HepG2 (cell line): ENCODE measurements at regions of chr1 and their contacts with region 1.

Region 1: DNA sequence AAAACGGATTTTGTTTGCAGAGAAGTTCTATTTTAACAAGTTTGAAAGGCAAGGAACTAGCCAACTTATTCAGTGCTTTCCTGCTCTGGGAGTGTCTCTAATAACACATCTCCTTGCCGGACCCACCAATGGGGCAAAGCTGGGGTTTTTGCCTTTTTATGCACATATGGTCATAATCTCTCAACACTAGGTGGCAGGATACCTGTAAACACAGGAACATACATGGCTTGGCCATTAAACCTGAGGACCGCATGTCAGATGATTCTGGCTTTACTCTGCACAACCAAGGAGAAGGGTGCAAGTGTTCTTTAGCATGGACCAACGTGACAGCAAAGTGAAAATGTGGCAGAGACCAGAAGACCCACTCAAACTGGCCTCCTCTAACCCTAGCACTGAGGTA is 4.9 kb downstream of the TMEM9 start:
- DNase-seq: peak; percentile 59
- ATAC-seq: peak; percentile 57
- H3K4me3 ChIP-seq: no peak overlapping the region
- H3K27ac ChIP-seq: no peak overlapping the region
- H3K4me1 ChIP-seq: peaks cover 13% of the 10 kb centered on the region
- H3K27me3 ChIP-seq: no peaks in the 10 kb centered on the region
- CTCF ChIP-seq: peak; percentile 68
- EP300 ChIP-seq: no peak
- POLR2A ChIP-seq: no peak
- RAD21 ChIP-seq: peak; percentile 70

Region 2: GRCh38 chr1:201114236-201115131 is 34.9 kb before region 1 on chr1:
- CTCF ChIA-PET with region 1: no interaction called
- POLR2A ChIA-PET with region 1: no interaction called
- in situ Hi-C with region 1: no loop called
- intact Hi-C with region 1: loop called (anchors 1 kb)
- DNase-seq: peak; percentile 70
- ATAC-seq: peak; percentile 97
- H3K4me3 ChIP-seq: peak overlapping the region in 2 of 3 experiments; percentile 48 to 74; a peak in 4 of 6 replicates
- H3K27ac ChIP-seq: no peak overlapping the region
- H3K4me1 ChIP-seq: no peaks in the 10 kb centered on the region
- H3K27me3 ChIP-seq: peaks cover 0 to 21% of the 10 kb centered on the region in 2 experiments; a peak in 3 of 5 replicates
- CTCF ChIP-seq: peak; percentile 95
- EP300 ChIP-seq: no peak
- POLR2A ChIP-seq: no peak
- RAD21 ChIP-seq: peak; percentile 90

Region 3: DNA sequence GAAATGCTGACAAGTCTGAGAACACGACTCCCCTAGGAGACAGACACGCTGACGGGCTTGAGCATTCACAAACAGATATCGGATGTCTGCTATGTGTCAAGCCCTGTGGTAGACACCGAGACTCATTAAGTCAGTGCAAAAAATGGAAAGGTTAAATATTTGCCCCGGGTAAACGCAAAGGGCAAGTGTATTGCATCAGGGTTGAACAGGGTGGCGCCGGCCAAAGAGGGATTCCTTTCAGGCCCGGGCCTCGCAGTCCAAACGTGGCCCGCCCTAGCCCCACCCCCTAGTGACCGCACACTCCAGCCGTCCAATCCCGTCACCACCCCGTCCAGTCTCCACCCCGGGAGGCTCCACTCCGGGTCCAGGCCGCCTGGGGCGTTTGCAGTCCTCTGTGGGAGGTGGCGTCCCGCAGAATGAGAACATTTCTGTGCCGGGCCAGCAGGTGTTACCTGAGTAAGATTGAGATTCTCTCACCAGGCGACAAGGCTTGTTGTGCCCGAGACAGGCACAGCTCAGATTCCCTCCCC is 21.2 kb after region 1 on chr1:
- CTCF ChIA-PET with region 1: no interaction called
- POLR2A ChIA-PET with region 1: interaction called, 30 read pairs
- in situ Hi-C with region 1: no loop called
- intact Hi-C with region 1: loop called (anchors 1 kb)
- DNase-seq: peak; percentile 99
- ATAC-seq: peak; percentile 97
- H3K4me3 ChIP-seq: peak overlapping the region; percentile 51 to 76 (median 54)
- H3K27ac ChIP-seq: peak overlapping the region; percentile 96
- H3K4me1 ChIP-seq: peaks cover 60% of the 10 kb centered on the region
- H3K27me3 ChIP-seq: no peaks in the 10 kb centered on the region; a peak in 2 of 5 replicates
- CTCF ChIP-seq: no peak
- EP300 ChIP-seq: peak; percentile 32 to 90; a peak in 2 of 4 replicates
- POLR2A ChIP-seq: peak; percentile 84 to 92
- RAD21 ChIP-seq: no peak

Region 4: DNA sequence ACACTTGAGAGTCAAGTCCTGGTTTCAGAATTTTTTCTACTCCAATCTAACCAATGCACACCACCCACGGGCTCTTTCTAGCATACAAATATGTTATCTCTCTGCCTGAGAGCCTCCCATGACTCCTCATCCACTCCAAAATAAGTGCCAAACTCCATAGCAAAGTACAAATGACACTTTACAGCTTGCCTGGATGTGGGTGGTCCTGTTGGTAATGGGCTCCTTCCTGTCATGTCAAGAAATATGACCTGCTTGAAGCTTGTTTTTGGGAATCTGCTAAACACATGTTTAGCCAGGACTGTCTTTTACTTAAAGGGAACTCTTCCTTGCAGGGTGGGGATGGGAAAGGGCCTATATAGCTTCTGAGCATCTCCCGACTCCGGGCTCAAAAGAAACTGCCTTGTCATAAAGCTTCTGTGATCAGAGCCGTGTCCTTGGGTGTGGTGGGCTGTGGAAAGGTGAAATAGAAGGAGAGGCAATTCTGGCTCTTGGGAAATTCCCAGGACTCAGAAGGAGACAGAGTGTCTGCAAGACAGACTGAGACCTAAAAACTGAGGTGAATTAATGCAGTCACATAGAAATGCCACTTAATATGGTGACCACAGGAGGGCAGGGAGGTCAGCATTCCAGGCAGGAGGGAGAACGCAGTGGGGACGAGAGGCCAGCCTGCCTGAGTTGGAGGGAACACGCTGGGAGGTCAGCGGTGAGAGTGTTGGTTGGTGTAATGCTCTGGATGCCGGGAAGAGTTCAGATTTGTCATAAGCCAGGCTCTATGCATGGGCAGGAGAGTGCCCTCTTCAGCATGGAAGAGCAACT is 35.1 kb after region 1 on chr1:
- CTCF ChIA-PET with region 1: interaction called, 16 read pairs
- POLR2A ChIA-PET with region 1: no interaction called
- in situ Hi-C with region 1: no loop called
- intact Hi-C with region 1: loop called (anchors 1 kb)
- DNase-seq: peak; percentile 58
- ATAC-seq: peak; percentile 98
- H3K4me3 ChIP-seq: no peak overlapping the region
- H3K27ac ChIP-seq: no peak overlapping the region
- H3K4me1 ChIP-seq: peaks cover 17% of the 10 kb centered on the region
- H3K27me3 ChIP-seq: peaks cover 3 to 54% of the 10 kb centered on the region in 2 experiments; a peak in 4 of 5 replicates
- CTCF ChIP-seq: peak; percentile 74
- EP300 ChIP-seq: no peak
- POLR2A ChIP-seq: no peak
- RAD21 ChIP-seq: peak; percentile 53; the same call in 1 of the 2 replicates

Region 5: DNA sequence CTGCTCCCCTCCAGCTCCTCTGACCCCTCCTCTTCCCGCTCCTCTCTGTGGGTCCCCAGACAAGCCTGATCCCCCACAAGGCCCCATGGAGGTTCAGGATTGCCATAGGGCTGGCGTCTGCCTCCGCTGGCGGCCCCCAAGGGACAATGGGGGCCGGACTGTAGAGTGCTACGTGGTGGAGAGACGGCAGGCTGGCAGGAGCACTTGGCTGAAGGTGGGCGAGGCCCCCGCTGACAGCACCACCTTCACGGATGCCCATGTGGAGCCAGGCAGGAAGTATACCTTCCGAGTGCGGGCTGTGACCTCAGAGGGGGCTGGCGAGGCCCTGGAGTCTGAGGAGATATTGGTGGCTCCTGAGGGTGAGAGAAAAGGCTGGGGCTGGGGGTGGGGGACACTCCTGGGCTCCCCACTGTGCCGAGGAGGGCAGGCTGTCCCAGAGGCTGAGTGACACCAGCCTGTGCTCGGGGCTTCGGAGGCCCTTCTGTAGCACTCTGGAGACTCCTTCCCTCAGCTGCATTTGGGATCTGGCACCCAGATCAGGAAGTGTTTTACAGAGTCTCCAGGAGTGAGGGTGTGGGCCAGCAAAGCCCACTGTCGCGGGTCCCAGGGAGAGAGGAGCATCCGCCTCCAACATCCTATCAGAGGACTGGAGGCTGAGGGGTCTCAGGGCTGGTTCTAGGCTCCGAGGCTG is 67.1 kb after region 1 on chr1:
- CTCF ChIA-PET with region 1: interaction called, 23 read pairs
- POLR2A ChIA-PET with region 1: no interaction called
- in situ Hi-C with region 1: loop called (anchors 5 kb)
- intact Hi-C with region 1: no loop called
- DNase-seq: no peak
- ATAC-seq: no peak
- H3K4me3 ChIP-seq: no peak overlapping the region
- H3K27ac ChIP-seq: no peak overlapping the region
- H3K4me1 ChIP-seq: peaks cover 24% of the 10 kb centered on the region
- H3K27me3 ChIP-seq: peaks cover 0 to 35% of the 10 kb centered on the region in 2 experiments; a peak in 3 of 5 replicates
- CTCF ChIP-seq: no peak
- EP300 ChIP-seq: no peak
- POLR2A ChIP-seq: no peak
- RAD21 ChIP-seq: no peak

Region 6: GRCh38 chr1:201224666-201225370 is 75.4 kb after region 1 on chr1:
- CTCF ChIA-PET with region 1: interaction called, 23 read pairs
- POLR2A ChIA-PET with region 1: no interaction called
- in situ Hi-C with region 1: no loop called
- intact Hi-C with region 1: loop called (anchors 1 kb)
- DNase-seq: no peak
- ATAC-seq: no peak
- H3K4me3 ChIP-seq: no peak overlapping the region
- H3K27ac ChIP-seq: no peak overlapping the region
- H3K4me1 ChIP-seq: peaks cover 30% of the 10 kb centered on the region
- H3K27me3 ChIP-seq: peaks cover 10 to 42% of the 10 kb centered on the region in 2 experiments
- CTCF ChIP-seq: no peak
- EP300 ChIP-seq: no peak
- POLR2A ChIP-seq: no peak
- RAD21 ChIP-seq: no peak